ENCODE measurements at regions of chr11 and their contacts with region 1.

Region 1: DNA sequence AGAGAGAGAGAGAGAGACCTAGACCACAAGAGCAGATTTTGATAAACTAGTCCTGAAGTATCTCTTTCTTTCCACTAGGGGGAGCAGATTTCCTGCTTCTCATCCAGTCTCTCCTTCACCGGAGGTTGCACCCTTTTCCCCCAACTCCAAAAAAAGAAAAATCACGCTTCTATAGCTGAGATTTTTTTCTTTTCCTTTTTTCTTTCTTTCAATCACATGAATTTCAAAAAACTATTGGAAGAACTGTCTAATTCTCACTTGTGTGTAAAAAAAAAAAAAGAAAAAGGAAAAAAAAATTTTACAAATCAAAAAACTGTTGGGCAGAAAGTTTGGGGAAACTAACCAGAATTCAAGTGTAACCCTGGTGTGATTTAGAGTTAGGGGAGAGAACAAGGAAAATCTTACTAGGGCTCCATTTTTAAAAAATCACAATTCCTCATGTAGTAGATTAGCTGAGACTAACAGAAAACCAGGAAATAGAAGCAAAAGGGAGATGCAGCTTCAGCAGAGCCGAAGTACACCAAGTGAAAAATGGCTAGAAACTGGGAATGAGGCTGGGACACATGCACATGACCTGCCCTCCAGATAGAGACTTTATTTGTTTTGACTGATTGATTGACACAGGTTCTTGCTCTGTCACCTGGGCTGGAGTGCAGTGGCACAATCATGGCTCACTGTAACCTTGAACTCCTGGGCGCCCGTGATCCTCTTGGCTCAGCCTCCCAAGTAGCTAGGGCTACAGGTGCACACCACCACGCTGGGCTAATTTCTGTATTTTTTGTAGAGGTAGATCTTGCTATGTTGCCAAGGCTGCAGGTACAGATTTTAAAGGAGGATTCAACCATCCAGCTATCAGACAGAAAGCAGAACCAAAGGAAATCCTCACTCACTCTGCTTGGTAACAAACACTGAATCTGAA is 27.1 kb downstream of the SDHD start:
- DNase-seq: no peak
- H3K4me3 Mint-ChIP-seq: no peak overlapping the region
- H3K27ac Mint-ChIP-seq: no peak overlapping the region
- H3K4me1 Mint-ChIP-seq: peaks cover 8% of the 10 kb centered on the region
- H3K27me3 Mint-ChIP-seq: no peaks in the 10 kb centered on the region

Region 2: GRCh38 chr11:111977146-111978027 is 136.4 kb before region 1 on chr11:
- CTCF ChIA-PET with region 1: no interaction called
- intact Hi-C with region 1: no loop called
- DNase-seq: peak; percentile 17
- H3K4me3 Mint-ChIP-seq: peak overlapping the region; percentile 66
- H3K27ac Mint-ChIP-seq: no peak overlapping the region
- H3K4me1 Mint-ChIP-seq: peaks cover 12% of the 10 kb centered on the region
- H3K27me3 Mint-ChIP-seq: peaks cover 30% of the 10 kb centered on the region

Region 3: DNA sequence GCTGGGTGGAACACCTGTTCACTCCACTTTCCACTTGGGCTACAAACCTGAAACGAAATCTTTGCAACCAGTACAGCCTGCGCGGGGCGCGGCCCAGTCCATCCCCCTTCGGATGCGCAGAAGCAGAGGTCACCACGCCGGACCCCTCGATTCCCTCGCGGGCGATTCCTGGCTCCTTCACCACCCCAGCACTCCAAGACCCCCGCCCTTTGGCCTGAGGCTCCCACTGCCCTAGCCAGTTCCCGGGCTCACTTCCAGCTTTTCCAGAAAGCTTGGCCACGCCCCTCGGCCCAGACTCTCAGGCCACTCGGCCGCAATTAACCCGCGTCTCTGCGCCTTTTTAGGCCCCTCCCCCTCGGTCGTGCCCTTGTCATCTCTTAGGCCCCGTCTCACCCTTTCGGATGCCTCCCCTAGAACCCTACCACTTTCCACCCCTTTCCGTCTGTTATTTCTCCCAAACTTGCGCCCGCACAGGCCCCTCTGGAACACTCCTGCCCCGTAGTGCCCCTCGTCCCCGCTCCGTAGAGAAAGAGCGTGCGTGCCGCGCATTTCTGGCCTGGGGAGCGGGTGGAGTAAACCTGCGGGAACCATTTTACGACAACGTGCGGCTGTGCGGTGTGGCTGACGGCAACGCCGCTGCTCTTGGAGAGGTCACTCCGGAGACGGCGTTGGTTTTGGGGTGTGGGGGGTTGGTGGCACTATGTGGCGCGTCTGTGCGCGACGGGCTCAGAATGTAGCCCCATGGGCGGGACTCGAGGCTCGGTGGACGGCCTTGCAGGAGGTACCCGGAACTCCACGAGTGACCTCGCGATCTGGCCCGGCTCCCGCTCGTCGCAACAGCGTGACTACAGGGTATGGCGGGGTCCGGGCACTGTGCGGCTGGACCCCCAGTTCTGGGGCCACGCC is 88.8 kb before region 1 on chr11 and contains the start of gene DLAT:
- CTCF ChIA-PET with region 1: no interaction called
- intact Hi-C with region 1: no loop called
- DNase-seq: peak; percentile 89
- H3K4me3 Mint-ChIP-seq: peak within 1 kb of the TSS; percentile 100
- H3K27ac Mint-ChIP-seq: peak within 1 kb of the TSS; percentile 100
- H3K4me1 Mint-ChIP-seq: peaks cover 28% of the 10 kb centered on the region
- H3K27me3 Mint-ChIP-seq: no peaks in the 10 kb centered on the region
- total RNA-seq, gene DLAT: 34.2 to 36.8 TPM

Region 4: DNA sequence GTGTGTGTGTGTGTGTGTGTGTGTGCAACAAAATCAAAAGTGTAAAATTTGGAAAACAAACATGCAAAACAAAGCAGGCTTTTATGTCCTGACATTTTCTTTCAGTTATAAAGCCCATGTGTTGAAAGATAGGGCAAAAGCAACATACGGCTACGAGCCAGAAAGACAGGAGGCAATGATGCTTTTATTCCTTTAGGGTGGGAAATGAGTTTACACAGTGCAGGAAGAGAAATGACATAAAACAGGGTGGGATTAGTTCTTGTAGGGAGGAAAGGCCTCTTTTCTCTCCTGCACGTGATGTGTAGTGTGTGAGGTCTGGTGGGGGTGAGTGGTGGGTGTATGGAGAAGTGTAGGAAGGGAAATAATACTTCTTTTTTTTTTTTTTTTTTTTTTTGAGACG is 20.7 kb after region 1 on chr11:
- CTCF ChIA-PET with region 1: interaction called, 10 read pairs
- intact Hi-C with region 1: no loop called
- DNase-seq: no peak
- H3K4me3 Mint-ChIP-seq: no peak overlapping the region
- H3K27ac Mint-ChIP-seq: no peak overlapping the region
- H3K4me1 Mint-ChIP-seq: no peaks in the 10 kb centered on the region
- H3K27me3 Mint-ChIP-seq: no peaks in the 10 kb centered on the region

Region 5: DNA sequence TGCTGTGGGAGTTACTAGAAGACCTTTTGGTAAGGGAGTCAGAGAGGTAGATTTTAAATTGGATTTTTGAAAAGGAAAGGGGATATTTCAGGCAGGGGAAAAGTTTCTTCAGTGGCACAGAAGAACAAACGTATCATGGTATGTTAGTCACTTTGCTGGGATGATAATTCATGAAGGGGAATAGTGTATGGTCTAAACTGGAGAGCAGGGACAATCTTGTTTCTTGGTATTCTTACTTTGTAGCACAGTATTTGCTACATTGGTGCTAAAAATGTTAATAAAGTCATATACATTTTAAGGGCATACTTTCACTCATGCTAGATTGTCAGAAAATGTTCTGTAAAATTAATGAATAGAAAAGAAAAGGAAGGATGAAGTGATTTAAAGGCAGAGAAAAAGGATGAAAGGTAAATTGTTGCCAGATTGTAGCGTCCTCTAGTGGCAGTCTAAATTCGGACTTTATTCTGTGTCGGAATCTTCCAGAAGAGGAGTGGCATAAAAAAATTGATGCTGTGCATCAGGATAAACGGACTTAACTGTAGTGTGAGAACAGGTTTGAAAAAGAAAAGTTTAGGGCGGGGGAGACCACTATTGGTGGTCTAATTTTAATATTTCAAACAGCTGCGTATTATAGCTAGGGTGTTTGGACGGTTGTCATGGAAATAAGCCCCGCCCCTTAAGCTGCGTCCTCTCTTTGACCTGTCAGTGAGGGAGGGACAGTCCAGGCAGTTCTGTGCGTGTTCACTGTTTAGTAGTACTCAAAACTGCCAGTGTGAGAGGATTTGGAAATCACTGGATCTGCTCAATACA is 61.2 kb after region 1 on chr11 and contains the start of gene BCO2:
- CTCF ChIA-PET with region 1: interaction called, 12 read pairs
- intact Hi-C with region 1: loop called (anchors 1 kb)
- DNase-seq: peak; percentile 60
- H3K4me3 Mint-ChIP-seq: peak within 1 kb of the TSS; percentile 50
- H3K27ac Mint-ChIP-seq: no peak within 1 kb of the TSS
- H3K4me1 Mint-ChIP-seq: peaks cover 13% of the 10 kb centered on the region
- H3K27me3 Mint-ChIP-seq: peaks cover 22% of the 10 kb centered on the region
- total RNA-seq, gene BCO2: 0.30 to 0.45 TPM

Region 6: GRCh38 chr11:112219476-112220232 is 105.9 kb after region 1 on chr11:
- CTCF ChIA-PET with region 1: interaction called, 17 read pairs
- intact Hi-C with region 1: loop called (anchors 2 kb)
- DNase-seq: peak; percentile 48
- H3K4me3 Mint-ChIP-seq: no peak overlapping the region
- H3K27ac Mint-ChIP-seq: no peak overlapping the region
- H3K4me1 Mint-ChIP-seq: no peaks in the 10 kb centered on the region
- H3K27me3 Mint-ChIP-seq: no peaks in the 10 kb centered on the region

Measured in activated naive CD4-positive, alpha-beta T cell treated with anti-CD3 and anti-CD28 coated beads for 36 hours (primary cell).